ENCODE measurements at regions of chr10 and their contacts with region 1.

Region 1: DNA sequence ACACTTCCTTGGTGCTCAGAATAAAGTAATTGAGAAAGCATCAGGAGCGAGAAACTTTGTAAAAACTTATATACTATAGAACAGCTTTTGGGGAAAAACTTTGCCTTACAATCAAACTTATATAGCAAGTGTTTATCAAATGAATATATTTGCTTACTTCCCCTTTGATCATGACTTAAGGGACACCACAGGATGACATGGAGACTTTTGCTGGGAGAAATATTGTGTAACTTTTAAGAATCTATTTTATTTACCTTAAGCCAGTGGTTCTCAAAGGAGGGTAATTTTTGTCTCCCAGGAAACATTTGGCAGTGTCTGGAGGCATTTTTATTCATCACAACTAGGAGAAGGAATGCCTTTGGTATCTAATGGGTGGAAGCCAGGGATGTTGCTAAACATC is 173.8 kb upstream of the HABP2 start:
- DNase-seq: no peak
- H3K4me3 ChIP-seq: no peak overlapping the region
- H3K27ac ChIP-seq: no peak overlapping the region
- H3K4me1 ChIP-seq: peaks cover 0 to 11% of the 10 kb centered on the region in 2 donors
- H3K27me3 ChIP-seq: no peaks in the 10 kb centered on the region
- CTCF ChIP-seq: no peak
- POLR2A ChIP-seq: no peak

Region 2: DNA sequence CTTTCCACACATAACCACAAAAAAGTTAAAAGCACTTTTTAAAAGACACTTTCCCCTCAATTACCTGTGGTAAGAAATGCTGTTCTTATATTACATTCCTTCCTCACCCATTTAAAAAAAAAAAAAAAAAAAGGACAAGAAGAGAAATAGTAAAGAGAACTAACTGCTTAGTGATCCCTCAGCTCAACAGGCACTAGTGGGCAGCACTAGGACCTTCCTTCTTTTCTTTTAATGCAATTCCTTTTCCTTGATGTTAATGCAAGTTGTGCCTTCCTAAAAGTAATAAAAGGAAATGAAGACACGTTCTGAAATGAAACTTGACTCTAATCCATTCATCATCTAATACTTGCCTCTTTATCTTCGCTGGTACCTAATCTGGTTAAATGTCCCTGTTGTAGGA is 239.4 kb before region 1 on chr10:
- intact Hi-C with region 1: loop called in 1 of 2 experiments (anchors 10 kb)
- DNase-seq: no peak
- H3K4me3 ChIP-seq: no peak overlapping the region
- H3K27ac ChIP-seq: no peak overlapping the region
- H3K4me1 ChIP-seq: peaks cover 0 to 9% of the 10 kb centered on the region in 2 donors
- H3K27me3 ChIP-seq: no peaks in the 10 kb centered on the region
- CTCF ChIP-seq: peak in 2 of 6 experiments; percentile 10 to 16
- POLR2A ChIP-seq: no peak

Region 3: DNA sequence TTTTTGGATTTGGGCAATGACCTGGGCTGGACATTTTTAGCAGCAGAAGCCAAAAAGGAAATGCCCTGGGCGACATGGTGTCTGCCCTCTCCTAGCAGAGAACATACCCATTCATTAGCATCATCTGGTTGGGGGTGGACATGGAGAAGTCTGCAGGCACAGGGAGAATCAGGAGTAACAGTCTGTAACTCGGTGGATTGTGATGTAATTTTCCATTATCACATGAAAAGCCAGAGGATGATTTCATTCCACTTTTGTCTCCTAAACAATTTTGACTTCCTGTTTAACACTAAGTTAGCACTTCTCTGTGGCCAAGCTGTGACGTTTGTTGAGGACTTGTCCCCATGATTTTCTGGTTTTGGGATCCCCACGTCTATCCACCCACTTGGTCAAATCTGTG is 20.0 kb after region 1 on chr10:
- intact Hi-C with region 1: no loop called
- DNase-seq: peak in 1 of 7 donors; percentile 9
- H3K4me3 ChIP-seq: no peak overlapping the region
- H3K27ac ChIP-seq: no peak overlapping the region
- H3K4me1 ChIP-seq: no peaks in the 10 kb centered on the region
- H3K27me3 ChIP-seq: no peaks in the 10 kb centered on the region
- CTCF ChIP-seq: no peak
- POLR2A ChIP-seq: no peak